Common myeloid progenitor, CD34-positive (primary cell): ENCODE measurements at regions of chr10 and their contacts with region 1.

Region 1: GRCh38 chr10:114043532-114044246 is at the start of gene ADRB1:
- DNase-seq: peak; percentile 56 to 80 (median 74)
- H3K4me3 ChIP-seq: peak within 1 kb of the TSS; percentile 22 to 82 (median 66)
- H3K27ac ChIP-seq: no peak within 1 kb of the TSS
- H3K4me1 ChIP-seq: peaks cover 5 to 36% (median 33%) of the 10 kb centered on the region in 4 experiments
- H3K27me3 ChIP-seq: peaks cover 2 to 58% (median 30%) of the 10 kb centered on the region in 5 experiments

Region 2: GRCh38 chr10:114031073-114031972 is 12.4 kb before region 1 on chr10:
- CTCF ChIA-PET with region 1: interaction called, 13 read pairs
- POLR2A ChIA-PET with region 1: no interaction called
- DNase-seq: no peak
- H3K4me3 ChIP-seq: no peak overlapping the region
- H3K27ac ChIP-seq: no peak overlapping the region
- H3K4me1 ChIP-seq: peaks cover 0 to 4% (median 2%) of the 10 kb centered on the region in 4 experiments
- H3K27me3 ChIP-seq: peaks cover 0 to 2% (median 0%) of the 10 kb centered on the region in 5 experiments

Region 3: GRCh38 chr10:114060456-114060855 is 16.8 kb after region 1 on chr10:
- CTCF ChIA-PET with region 1: interaction called, 28 read pairs
- POLR2A ChIA-PET with region 1: no interaction called
- DNase-seq: peak; percentile 57 to 83 (median 81)
- H3K4me3 ChIP-seq: peak overlapping the region in 1 of 7 experiments; percentile 31
- H3K27ac ChIP-seq: no peak overlapping the region
- H3K4me1 ChIP-seq: peaks cover 11 to 82% (median 51%) of the 10 kb centered on the region in 4 experiments
- H3K27me3 ChIP-seq: no peaks in the 10 kb centered on the region